GM12878 (cell line): ENCODE measurements at regions of chr9 and their contacts with region 1.

Region 1: GRCh38 chr9:87535817-87536539 is 38.3 kb downstream of the DAPK1 start:
- DNase-seq: peak; percentile 80
- ATAC-seq: peak; percentile 90
- H3K4me3 ChIP-seq: no peak overlapping the region
- H3K27ac ChIP-seq: peak overlapping the region; percentile 91
- H3K4me1 ChIP-seq: peaks cover 17% of the 10 kb centered on the region; the same call in 1 of the 2 replicates
- H3K27me3 ChIP-seq: no peaks in the 10 kb centered on the region
- CTCF ChIP-seq: no peak
- EP300 ChIP-seq: peak; percentile 47 to 57; a peak in 3 of 4 replicates
- POLR2A ChIP-seq: peak; percentile 64; the same call in 1 of the 2 replicates
- RAD21 ChIP-seq: no peak; the same call in 1 of the 2 replicates

Region 2: DNA sequence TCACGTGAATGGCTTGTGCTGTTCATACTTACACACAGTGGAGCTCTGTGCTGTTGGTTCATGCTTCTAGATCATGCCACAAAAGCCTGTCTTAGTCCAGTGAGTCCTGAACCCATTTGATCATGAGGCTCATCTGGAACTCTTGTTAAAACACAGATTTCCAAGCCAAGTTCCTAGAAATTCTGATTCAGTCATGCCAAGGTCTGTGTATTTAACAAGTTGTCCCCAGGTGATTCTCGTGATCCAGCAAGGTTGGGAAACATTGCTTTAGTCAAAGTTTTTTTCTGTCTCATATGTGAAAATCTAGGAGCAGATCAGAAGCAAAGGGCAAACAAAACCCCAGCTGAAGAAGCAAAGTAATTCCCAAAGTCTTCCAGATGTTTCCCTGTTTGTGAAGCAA is 476.2 kb before region 1 on chr9:
- CTCF ChIA-PET with region 1: no interaction called
- POLR2A ChIA-PET with region 1: no interaction called
- RAD21 ChIA-PET with region 1: no interaction called
- SMC1A ChIA-PET with region 1: no interaction called
- in situ Hi-C with region 1: no loop called
- intact Hi-C with region 1: no loop called
- DNase-seq: no peak
- ATAC-seq: no peak
- H3K4me3 ChIP-seq: no peak overlapping the region
- H3K27ac ChIP-seq: no peak overlapping the region
- H3K4me1 ChIP-seq: no peaks in the 10 kb centered on the region
- H3K27me3 ChIP-seq: no peaks in the 10 kb centered on the region
- CTCF ChIP-seq: no peak
- EP300 ChIP-seq: no peak
- POLR2A ChIP-seq: no peak
- RAD21 ChIP-seq: no peak

Region 3: DNA sequence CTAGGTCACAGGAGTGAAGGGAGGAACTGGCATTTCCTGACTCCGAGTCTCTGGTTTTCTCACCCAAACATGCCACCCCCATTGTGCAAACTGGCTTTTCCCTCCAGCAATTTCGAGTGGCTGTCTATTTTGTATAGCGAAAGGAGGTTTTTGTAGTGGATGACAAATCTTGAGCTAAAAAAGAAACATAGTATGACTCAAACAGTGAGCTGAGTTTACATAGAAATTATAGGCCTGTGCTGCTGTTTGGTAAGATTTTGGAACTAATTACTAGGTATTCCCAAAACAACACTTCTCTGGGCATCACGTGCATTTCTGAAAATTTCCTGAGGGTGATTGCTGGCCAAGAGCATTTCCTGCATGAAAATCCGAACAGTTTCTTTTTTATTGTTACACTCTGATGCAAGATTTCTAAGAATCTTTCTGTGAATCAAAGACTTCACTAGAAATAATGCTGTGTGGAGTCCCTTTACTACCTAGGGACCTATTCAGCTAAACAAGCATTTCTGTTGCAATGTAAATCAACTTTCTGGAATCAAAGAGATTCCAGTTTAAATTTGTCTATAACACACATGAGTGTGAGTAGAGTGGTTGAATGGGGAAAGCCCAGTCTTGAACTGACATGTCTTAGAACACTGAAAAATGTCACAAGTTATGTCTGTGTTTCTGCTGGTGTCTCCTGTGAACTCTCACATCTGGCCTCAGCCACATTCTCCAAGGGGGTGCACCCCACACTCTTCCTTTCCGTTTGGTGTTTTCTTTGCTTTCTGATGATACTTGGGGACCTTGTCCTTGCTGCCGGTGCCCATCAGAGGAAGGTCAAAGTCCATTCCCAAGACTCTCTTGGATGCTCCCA is 71.6 kb before region 1 on chr9:
- CTCF ChIA-PET with region 1: interaction called, 3 read pairs
- POLR2A ChIA-PET with region 1: interaction called, 7 read pairs
- RAD21 ChIA-PET with region 1: interaction called, 25 read pairs
- SMC1A ChIA-PET with region 1: interaction called, 31 read pairs
- in situ Hi-C with region 1: no loop called
- intact Hi-C with region 1: loop called (anchors 2 kb)
- DNase-seq: peak; percentile 82
- ATAC-seq: peak; percentile 86
- H3K4me3 ChIP-seq: peak overlapping the region; percentile 12; the same call in 1 of the 2 replicates
- H3K27ac ChIP-seq: peak overlapping the region; percentile 90
- H3K4me1 ChIP-seq: peaks cover 14% of the 10 kb centered on the region
- H3K27me3 ChIP-seq: no peaks in the 10 kb centered on the region
- CTCF ChIP-seq: no peak
- EP300 ChIP-seq: peak; percentile 77 to 84; a peak in 3 of 4 replicates
- POLR2A ChIP-seq: no peak
- RAD21 ChIP-seq: peak; percentile 6; the same call in 1 of the 2 replicates

Region 4: GRCh38 chr9:87502436-87503221 is 33.3 kb before region 1 on chr9:
- CTCF ChIA-PET with region 1: interaction called, 7 read pairs
- POLR2A ChIA-PET with region 1: interaction called, 11 read pairs
- RAD21 ChIA-PET with region 1: interaction called, 14 read pairs
- SMC1A ChIA-PET with region 1: interaction called, 25 read pairs
- in situ Hi-C with region 1: no loop called
- intact Hi-C with region 1: no loop called
- DNase-seq: no peak
- ATAC-seq: peak; percentile 3; the same call in 2 of the 3 replicates
- H3K4me3 ChIP-seq: peak overlapping the region; percentile 33
- H3K27ac ChIP-seq: peak overlapping the region; percentile 41
- H3K4me1 ChIP-seq: peaks cover 13% of the 10 kb centered on the region
- H3K27me3 ChIP-seq: no peaks in the 10 kb centered on the region
- CTCF ChIP-seq: no peak
- EP300 ChIP-seq: no peak
- POLR2A ChIP-seq: no peak
- RAD21 ChIP-seq: 0 out of 2 replicates have a peak, but pooled peaks have one; percentile 3

Region 5: DNA sequence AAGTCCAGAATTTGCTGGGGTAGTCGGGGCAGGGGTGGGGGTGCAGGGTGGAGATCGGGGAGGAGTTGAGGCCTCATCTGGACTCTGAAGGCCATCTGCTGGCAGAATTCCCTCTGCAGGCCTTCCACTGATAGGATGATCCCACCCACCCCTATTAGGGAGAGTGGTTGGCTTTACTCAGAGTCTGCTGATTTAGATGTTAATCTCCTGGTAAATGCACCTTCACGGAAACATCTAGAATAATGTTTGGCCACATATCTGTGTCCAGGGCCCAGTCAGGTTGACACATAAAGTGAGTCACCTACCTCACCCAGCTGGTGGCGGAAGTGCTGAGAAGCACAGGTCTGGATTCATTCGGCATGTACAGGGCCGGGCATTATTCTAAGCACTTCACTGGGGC is 11.7 kb after region 1 on chr9:
- CTCF ChIA-PET with region 1: no interaction called
- POLR2A ChIA-PET with region 1: no interaction called
- RAD21 ChIA-PET with region 1: interaction called, 5 read pairs
- SMC1A ChIA-PET with region 1: interaction called, 12 read pairs
- in situ Hi-C with region 1: no loop called
- intact Hi-C with region 1: no loop called
- DNase-seq: no peak
- ATAC-seq: no peak
- H3K4me3 ChIP-seq: no peak overlapping the region
- H3K27ac ChIP-seq: no peak overlapping the region
- H3K4me1 ChIP-seq: no peaks in the 10 kb centered on the region
- H3K27me3 ChIP-seq: no peaks in the 10 kb centered on the region
- CTCF ChIP-seq: no peak; a peak in 1 of 6 replicates
- EP300 ChIP-seq: no peak
- POLR2A ChIP-seq: no peak
- RAD21 ChIP-seq: no peak

Region 6: GRCh38 chr9:87569518-87569917 is 33.5 kb after region 1 on chr9:
- CTCF ChIA-PET with region 1: interaction called, 4 read pairs
- POLR2A ChIA-PET with region 1: interaction called, 3 read pairs
- RAD21 ChIA-PET with region 1: interaction called, 19 read pairs
- SMC1A ChIA-PET with region 1: interaction called, 13 read pairs
- in situ Hi-C with region 1: no loop called
- intact Hi-C with region 1: no loop called
- DNase-seq: no peak
- ATAC-seq: peak; percentile 63
- H3K4me3 ChIP-seq: no peak overlapping the region
- H3K27ac ChIP-seq: peak overlapping the region; percentile 28; the same call in 1 of the 2 replicates
- H3K4me1 ChIP-seq: peaks cover 27% of the 10 kb centered on the region
- H3K27me3 ChIP-seq: no peaks in the 10 kb centered on the region
- CTCF ChIP-seq: no peak
- EP300 ChIP-seq: no peak
- POLR2A ChIP-seq: no peak
- RAD21 ChIP-seq: no peak

Region 7: DNA sequence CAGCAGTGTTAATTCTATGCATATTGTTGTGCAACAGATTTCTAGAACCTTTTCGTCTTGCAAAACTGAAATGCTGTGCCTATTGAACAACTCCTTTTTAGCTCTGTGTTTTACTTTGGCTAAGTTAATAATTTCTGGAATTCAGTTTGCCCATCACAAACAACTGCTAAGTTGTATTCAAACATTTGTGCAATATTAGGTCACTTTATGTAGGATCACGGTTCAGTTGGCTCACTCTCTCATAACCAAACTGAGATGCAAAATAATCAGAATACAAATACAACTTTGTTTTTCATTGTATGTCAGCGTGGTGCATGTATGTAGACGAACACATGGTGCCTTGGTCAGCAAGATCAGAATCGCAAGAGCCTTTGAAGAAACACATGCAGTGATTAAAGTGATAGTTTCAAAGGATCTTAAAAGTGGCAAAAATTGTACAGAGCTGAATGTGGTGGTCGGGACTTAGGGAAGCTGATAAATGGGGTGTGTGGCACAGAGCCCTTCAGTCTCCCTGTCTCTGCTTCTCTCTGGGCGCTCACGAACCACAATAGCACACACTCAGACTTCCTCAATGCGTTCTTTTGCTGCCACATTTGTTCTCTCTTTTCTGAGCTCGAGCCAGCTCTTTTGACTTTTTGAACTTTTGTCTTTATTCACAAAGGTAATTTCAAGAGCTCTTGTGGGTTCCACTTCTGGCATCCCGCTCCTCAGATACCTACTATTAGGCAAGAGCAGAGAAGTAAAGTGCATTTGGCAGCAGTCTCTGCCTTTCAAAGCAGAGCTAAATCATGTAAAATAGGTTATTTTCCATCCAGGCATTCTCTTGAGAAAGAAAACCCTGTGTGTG is 77.5 kb after region 1 on chr9:
- CTCF ChIA-PET with region 1: no interaction called
- POLR2A ChIA-PET with region 1: no interaction called
- RAD21 ChIA-PET with region 1: interaction called, 15 read pairs
- SMC1A ChIA-PET with region 1: interaction called, 7 read pairs
- in situ Hi-C with region 1: no loop called
- intact Hi-C with region 1: no loop called
- DNase-seq: peak; percentile 21
- ATAC-seq: peak; percentile 71
- H3K4me3 ChIP-seq: peak overlapping the region; percentile 11; the same call in 1 of the 2 replicates
- H3K27ac ChIP-seq: peak overlapping the region; percentile 59
- H3K4me1 ChIP-seq: peaks cover 27% of the 10 kb centered on the region
- H3K27me3 ChIP-seq: no peaks in the 10 kb centered on the region
- CTCF ChIP-seq: no peak
- EP300 ChIP-seq: no peak
- POLR2A ChIP-seq: no peak
- RAD21 ChIP-seq: no peak